A673 (cell line): ENCODE measurements at regions of chr10 and their contacts with region 1.

Region 1: GRCh38 chr10:76984559-76985443 is 652.8 kb downstream of the KCNMA1 start:
- DNase-seq: peak; percentile 72
- H3K4me3 ChIP-seq: no peak overlapping the region
- H3K27ac ChIP-seq: no peak overlapping the region
- H3K4me1 ChIP-seq: peaks cover 16% of the 10 kb centered on the region
- H3K27me3 ChIP-seq: no peaks in the 10 kb centered on the region
- CTCF ChIP-seq: peak; percentile 94

Region 2: GRCh38 chr10:76547352-76547972 is 437.3 kb before region 1 on chr10:
- CTCF ChIA-PET with region 1: interaction called, 3 read pairs
- POLR2A ChIA-PET with region 1: no interaction called
- intact Hi-C with region 1: loop called (anchors 5 kb)
- DNase-seq: peak; percentile 83
- H3K4me3 ChIP-seq: no peak overlapping the region
- H3K27ac ChIP-seq: no peak overlapping the region
- H3K4me1 ChIP-seq: no peaks in the 10 kb centered on the region
- H3K27me3 ChIP-seq: no peaks in the 10 kb centered on the region
- CTCF ChIP-seq: peak; percentile 84

Region 3: DNA sequence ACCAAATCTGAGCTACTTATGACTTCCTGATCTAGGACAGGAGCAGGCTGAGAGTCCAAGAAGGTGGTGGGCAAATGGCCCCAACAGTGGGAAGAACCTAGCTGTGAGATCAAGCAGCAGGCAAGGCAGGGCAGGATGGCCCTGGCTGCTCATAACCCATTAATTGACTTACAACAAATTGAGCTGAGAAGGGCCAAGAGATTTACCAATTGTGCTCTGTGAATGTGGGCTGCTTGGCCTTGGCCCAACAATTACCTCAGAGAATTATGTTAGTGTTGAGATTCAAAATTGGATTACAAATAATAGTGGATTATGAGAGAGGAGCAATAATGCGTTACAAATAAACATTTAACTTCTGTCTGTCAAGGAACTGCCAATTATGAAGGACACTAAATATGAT is 303.6 kb before region 1 on chr10:
- CTCF ChIA-PET with region 1: no interaction called
- POLR2A ChIA-PET with region 1: no interaction called
- intact Hi-C with region 1: no loop called
- DNase-seq: peak; percentile 13
- H3K4me3 ChIP-seq: no peak overlapping the region
- H3K27ac ChIP-seq: no peak overlapping the region
- H3K4me1 ChIP-seq: no peaks in the 10 kb centered on the region
- H3K27me3 ChIP-seq: peaks cover 30% of the 10 kb centered on the region
- CTCF ChIP-seq: no peak

Region 4: GRCh38 chr10:76697923-76698322 is 286.9 kb before region 1 on chr10:
- CTCF ChIA-PET with region 1: no interaction called
- POLR2A ChIA-PET with region 1: interaction called, 4 read pairs
- intact Hi-C with region 1: loop called (anchors 2 kb)
- DNase-seq: peak; percentile 76
- H3K4me3 ChIP-seq: no peak overlapping the region
- H3K27ac ChIP-seq: no peak overlapping the region
- H3K4me1 ChIP-seq: no peaks in the 10 kb centered on the region
- H3K27me3 ChIP-seq: peaks cover 35% of the 10 kb centered on the region
- CTCF ChIP-seq: no peak